ENCODE measurements at regions of chr17 and their contacts with region 1.

Region 1: GRCh38 chr17:49997791-49998703 is 3.0 kb upstream of the DLX3 start:
- DNase-seq: peak; percentile 66 to 92 (median 83)
- ATAC-seq: peak; percentile 78
- H3K4me3 ChIP-seq: no peak overlapping the region
- H3K4me3 Mint-ChIP-seq: no peak overlapping the region
- H3K27ac ChIP-seq: no peak overlapping the region
- H3K27ac Mint-ChIP-seq: no peak overlapping the region
- H3K4me1 ChIP-seq: peaks cover 31% of the 10 kb centered on the region
- H3K4me1 Mint-ChIP-seq: peaks cover 33% of the 10 kb centered on the region
- H3K27me3 ChIP-seq: peaks cover 38 to 53% of the 10 kb centered on the region in 2 experiments
- H3K27me3 Mint-ChIP-seq: peaks cover 77% of the 10 kb centered on the region
- CTCF ChIP-seq: peak; percentile 85

Region 2: DNA sequence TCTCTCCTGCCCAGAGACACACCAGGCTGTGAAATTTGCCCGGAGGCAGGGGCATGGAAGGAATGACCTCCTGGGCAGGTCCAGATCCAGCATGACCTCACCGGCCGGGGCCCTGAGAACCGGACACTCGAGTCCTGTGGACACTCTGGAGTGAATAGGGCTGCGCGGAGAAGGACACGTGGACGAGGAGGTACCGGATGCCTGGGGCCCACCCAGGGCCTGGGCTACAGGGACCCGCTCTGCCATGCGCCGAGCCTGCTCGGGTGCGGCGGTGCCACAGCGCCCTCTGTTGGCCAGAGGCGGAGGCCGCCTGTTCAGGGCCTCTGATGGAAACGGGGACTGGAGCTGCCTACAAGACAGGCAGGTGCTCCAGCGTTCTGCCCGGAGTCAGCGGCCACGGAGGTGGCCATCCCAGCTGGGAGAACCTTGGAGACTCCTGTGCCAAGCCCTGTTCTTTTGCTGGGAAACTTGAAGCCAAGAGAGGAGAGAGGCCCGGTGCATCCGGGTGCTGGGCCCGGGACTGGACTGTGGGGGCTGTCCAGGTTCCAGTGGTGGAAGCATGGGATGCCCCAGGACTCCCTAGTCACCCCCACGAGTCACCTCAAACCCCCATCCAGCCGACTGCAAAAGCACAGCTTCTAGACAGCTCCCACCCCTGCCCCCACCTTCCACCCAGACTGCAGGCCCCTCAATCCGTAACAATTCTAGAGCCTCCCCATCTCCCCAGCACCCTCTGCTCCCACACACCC is 441.6 kb before region 1 on chr17:
- CTCF ChIA-PET with region 1: interaction called, 18 read pairs
- POLR2A ChIA-PET with region 1: no interaction called
- intact Hi-C with region 1: no loop called
- DNase-seq: peak; percentile 68 to 89 (median 81)
- ATAC-seq: peak; percentile 99
- H3K4me3 ChIP-seq: no peak overlapping the region
- H3K4me3 Mint-ChIP-seq: no peak overlapping the region
- H3K27ac ChIP-seq: no peak overlapping the region
- H3K27ac Mint-ChIP-seq: no peak overlapping the region
- H3K4me1 ChIP-seq: peaks cover 7% of the 10 kb centered on the region
- H3K4me1 Mint-ChIP-seq: peaks cover 5% of the 10 kb centered on the region
- H3K27me3 ChIP-seq: no peaks in the 10 kb centered on the region
- H3K27me3 Mint-ChIP-seq: peaks cover 3% of the 10 kb centered on the region
- CTCF ChIP-seq: peak; percentile 92

Region 3: DNA sequence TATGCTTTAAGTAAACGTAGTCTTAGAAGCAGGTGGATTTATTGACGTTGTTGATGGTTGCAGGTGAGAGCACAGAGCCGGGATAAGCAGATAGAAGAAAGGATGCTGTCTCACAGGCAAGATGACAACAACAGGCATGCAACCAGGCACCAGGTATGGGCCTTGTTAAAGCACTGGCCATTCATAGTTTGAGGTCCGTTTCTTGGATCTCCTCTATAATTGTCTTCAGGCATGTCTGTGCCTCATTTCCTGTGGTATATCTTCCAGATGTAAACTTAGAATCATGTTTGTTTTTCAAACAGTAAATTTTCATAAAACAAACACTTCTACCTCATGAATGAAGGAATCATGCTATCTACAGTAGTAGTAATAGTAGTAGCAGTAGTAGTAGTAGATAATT is 189.0 kb before region 1 on chr17:
- CTCF ChIA-PET with region 1: no interaction called
- POLR2A ChIA-PET with region 1: no interaction called
- intact Hi-C with region 1: no loop called
- DNase-seq: no peak
- ATAC-seq: no peak
- H3K4me3 ChIP-seq: no peak overlapping the region
- H3K4me3 Mint-ChIP-seq: no peak overlapping the region
- H3K27ac ChIP-seq: no peak overlapping the region
- H3K27ac Mint-ChIP-seq: peak overlapping the region; percentile 3
- H3K4me1 ChIP-seq: no peaks in the 10 kb centered on the region
- H3K4me1 Mint-ChIP-seq: peaks cover 42% of the 10 kb centered on the region
- H3K27me3 ChIP-seq: no peaks in the 10 kb centered on the region
- H3K27me3 Mint-ChIP-seq: no peaks in the 10 kb centered on the region
- CTCF ChIP-seq: no peak

Region 4: GRCh38 chr17:49851387-49852291 is 146.4 kb before region 1 on chr17:
- CTCF ChIA-PET with region 1: interaction called, 198 read pairs
- POLR2A ChIA-PET with region 1: no interaction called
- intact Hi-C with region 1: no loop called
- DNase-seq: peak; percentile 47 to 87 (median 76)
- ATAC-seq: peak; percentile 77
- H3K4me3 ChIP-seq: peak overlapping the region; percentile 73 to 83
- H3K4me3 Mint-ChIP-seq: peak overlapping the region; percentile 92
- H3K27ac ChIP-seq: peak overlapping the region; percentile 59 to 66
- H3K27ac Mint-ChIP-seq: peak overlapping the region; percentile 89
- H3K4me1 ChIP-seq: peaks cover 17% of the 10 kb centered on the region
- H3K4me1 Mint-ChIP-seq: peaks cover 15% of the 10 kb centered on the region
- H3K27me3 ChIP-seq: no peaks in the 10 kb centered on the region
- H3K27me3 Mint-ChIP-seq: no peaks in the 10 kb centered on the region
- CTCF ChIP-seq: peak; percentile 72

Region 5: DNA sequence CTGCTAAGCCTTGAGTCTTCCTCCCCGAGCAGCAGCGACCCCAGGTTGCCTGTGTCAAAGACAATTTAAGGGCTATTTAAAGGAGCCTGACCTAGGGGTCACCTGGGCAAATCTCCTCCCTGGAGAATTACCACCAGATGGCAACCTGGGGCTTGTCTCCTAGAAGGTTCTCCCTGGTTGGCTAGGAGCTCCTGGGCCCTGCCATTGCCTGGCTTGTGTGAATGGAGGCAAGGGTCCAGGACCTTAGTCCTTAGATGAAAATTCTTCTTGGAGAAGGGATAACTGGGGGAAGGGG is 98.9 kb before region 1 on chr17:
- CTCF ChIA-PET with region 1: interaction called, 28 read pairs
- POLR2A ChIA-PET with region 1: no interaction called
- intact Hi-C with region 1: no loop called
- DNase-seq: no peak
- ATAC-seq: no peak
- H3K4me3 ChIP-seq: no peak overlapping the region
- H3K4me3 Mint-ChIP-seq: no peak overlapping the region
- H3K27ac ChIP-seq: no peak overlapping the region
- H3K27ac Mint-ChIP-seq: no peak overlapping the region
- H3K4me1 ChIP-seq: peaks cover 3% of the 10 kb centered on the region
- H3K4me1 Mint-ChIP-seq: peaks cover 2% of the 10 kb centered on the region
- H3K27me3 ChIP-seq: peaks cover 9 to 15% of the 10 kb centered on the region in 2 experiments
- H3K27me3 Mint-ChIP-seq: peaks cover 58% of the 10 kb centered on the region
- CTCF ChIP-seq: no peak

Region 6: DNA sequence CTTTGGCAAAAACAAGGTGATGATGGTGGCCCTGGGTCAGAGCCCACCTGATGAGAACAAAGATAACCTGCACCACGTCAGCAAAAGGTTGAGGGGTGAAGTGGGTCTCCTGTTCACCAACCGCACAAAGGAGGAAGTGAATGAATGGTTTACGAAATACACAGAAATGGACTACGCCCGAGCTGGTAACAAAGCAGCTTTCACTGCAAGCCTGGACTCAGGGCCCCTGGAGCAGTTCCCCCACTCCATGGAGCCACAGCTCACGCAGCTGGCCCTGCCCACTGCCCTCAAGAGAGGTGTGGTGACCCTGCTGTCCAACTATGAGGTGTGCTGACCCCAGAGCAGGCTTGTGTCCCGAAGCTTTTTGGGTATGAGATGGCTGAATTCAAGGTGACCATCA is 58.7 kb before region 1 on chr17:
- CTCF ChIA-PET with region 1: interaction called, 35 read pairs
- POLR2A ChIA-PET with region 1: no interaction called
- intact Hi-C with region 1: no loop called
- DNase-seq: no peak
- ATAC-seq: no peak
- H3K4me3 ChIP-seq: no peak overlapping the region
- H3K4me3 Mint-ChIP-seq: no peak overlapping the region
- H3K27ac ChIP-seq: no peak overlapping the region
- H3K27ac Mint-ChIP-seq: no peak overlapping the region
- H3K4me1 ChIP-seq: no peaks in the 10 kb centered on the region
- H3K4me1 Mint-ChIP-seq: no peaks in the 10 kb centered on the region
- H3K27me3 ChIP-seq: peaks cover 0 to 4% of the 10 kb centered on the region in 2 experiments
- H3K27me3 Mint-ChIP-seq: peaks cover 40% of the 10 kb centered on the region
- CTCF ChIP-seq: no peak

Region 7: GRCh38 chr17:49969134-49969759 is 28.8 kb before region 1 on chr17 and contains the start of gene DLX4:
- CTCF ChIA-PET with region 1: interaction called, 117 read pairs
- POLR2A ChIA-PET with region 1: interaction called, 3 read pairs
- intact Hi-C with region 1: no loop called
- DNase-seq: peak in 5 of 9 experiments; percentile 13 to 55 (median 34)
- ATAC-seq: no peak
- H3K4me3 ChIP-seq: peak within 1 kb of the TSS; percentile 74 to 76
- H3K4me3 Mint-ChIP-seq: peak within 1 kb of the TSS; percentile 91
- H3K27ac ChIP-seq: no peak within 1 kb of the TSS
- H3K27ac Mint-ChIP-seq: peak within 1 kb of the TSS; percentile 45
- H3K4me1 ChIP-seq: peaks cover 59% of the 10 kb centered on the region
- H3K4me1 Mint-ChIP-seq: peaks cover 55% of the 10 kb centered on the region
- H3K27me3 ChIP-seq: peaks cover 48 to 69% of the 10 kb centered on the region in 2 experiments
- H3K27me3 Mint-ChIP-seq: peaks cover 65% of the 10 kb centered on the region
- CTCF ChIP-seq: no peak
- total RNA-seq, gene DLX4: 0.44 to 0.60 TPM

Region 8: DNA sequence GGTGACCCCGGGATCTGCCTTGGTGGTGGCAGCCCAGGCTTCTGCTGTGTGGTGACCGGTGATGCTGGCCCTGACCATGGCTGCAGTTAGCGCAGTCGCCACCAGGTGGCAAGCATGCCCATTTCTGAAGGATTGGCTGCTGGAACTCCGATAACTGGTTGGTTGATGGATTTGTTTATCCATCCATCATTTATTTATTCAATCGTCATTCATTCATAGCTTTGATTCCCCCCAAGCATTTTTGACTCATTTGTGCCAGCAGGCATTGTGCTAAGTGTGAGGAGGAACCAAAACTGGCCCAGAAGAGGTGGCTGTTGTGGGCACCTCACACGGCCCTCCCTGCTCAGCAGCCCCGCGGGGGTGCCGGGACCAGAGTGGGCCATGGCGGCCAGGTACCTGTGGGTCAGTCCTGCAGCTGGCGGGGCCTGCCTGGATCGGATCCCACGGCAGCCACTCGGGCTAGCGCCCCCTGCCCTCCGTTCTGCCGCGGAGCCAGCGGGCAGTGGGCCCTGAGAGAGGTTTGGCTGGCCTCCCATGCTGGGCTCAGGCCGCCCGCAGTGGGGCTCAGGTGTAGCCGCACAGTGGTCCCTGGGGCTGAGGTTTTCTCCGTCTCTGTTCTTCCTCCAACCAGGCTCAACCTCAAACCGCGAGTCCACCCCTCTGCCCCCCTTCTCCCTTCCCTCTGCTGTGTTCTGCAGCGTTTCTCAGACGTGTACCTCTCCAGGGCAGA is 29.0 kb after region 1 on chr17:
- CTCF ChIA-PET with region 1: interaction called, 11 read pairs
- POLR2A ChIA-PET with region 1: no interaction called
- intact Hi-C with region 1: no loop called
- DNase-seq: peak; percentile 57 to 87 (median 80)
- ATAC-seq: peak; percentile 92
- H3K4me3 ChIP-seq: no peak overlapping the region
- H3K4me3 Mint-ChIP-seq: peak overlapping the region; percentile 37
- H3K27ac ChIP-seq: no peak overlapping the region
- H3K27ac Mint-ChIP-seq: no peak overlapping the region
- H3K4me1 ChIP-seq: peaks cover 8% of the 10 kb centered on the region
- H3K4me1 Mint-ChIP-seq: peaks cover 9% of the 10 kb centered on the region
- H3K27me3 ChIP-seq: peaks cover 0 to 5% of the 10 kb centered on the region in 2 experiments
- H3K27me3 Mint-ChIP-seq: peaks cover 29% of the 10 kb centered on the region
- CTCF ChIP-seq: peak; percentile 96

Measured in CD8-positive, alpha-beta T cell (primary cell).